K562 (cell line): ENCODE measurements at regions of chr12 and their contacts with region 1.

Region 1: DNA sequence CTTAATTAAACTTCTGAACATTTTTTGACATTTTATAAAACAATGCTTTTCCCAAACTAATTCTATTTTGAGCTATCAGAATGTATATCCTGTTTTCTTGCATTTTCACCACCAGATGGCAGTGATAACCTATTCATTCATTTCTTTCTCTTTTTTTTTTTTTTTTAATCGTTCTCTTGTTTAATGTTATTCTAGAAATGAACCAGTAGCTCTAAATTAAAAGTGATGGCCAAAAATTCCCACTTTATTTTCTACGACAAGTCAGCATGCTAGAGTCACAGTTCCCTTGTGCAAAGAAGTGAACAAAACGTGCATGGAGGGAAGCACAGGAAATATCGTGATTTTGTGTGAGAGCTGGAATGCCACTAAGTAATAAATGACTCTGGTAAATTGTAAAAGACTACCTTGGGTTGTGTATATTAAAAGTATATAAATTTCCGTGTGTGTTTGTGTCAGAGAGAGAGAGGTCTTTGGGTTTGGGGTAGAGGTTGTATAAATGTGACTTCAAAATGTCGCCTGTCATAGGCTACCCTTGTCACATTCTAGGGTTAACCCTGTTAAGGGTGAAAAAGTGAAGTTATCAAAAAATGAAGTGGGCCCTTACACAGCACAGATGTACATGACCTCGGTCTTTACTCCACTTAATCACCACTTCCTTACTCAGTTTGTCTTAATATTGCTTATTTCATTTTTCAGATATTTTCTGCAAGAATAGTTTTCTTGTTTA is 40.4 kb upstream of the LDHB start:
- DNase-seq: peak in 2 of 4 experiments; percentile 6 to 45
- ATAC-seq: no peak
- H3K4me3 ChIP-seq: no peak overlapping the region
- H3K27ac ChIP-seq: no peak overlapping the region
- H3K4me1 ChIP-seq: peaks cover 0 to 3% of the 10 kb centered on the region in 2 experiments; a peak in 1 of 5 replicates
- H3K27me3 ChIP-seq: no peaks in the 10 kb centered on the region
- CTCF ChIP-seq: peak in 2 of 3 experiments; percentile 15 to 67; a peak in 2 of 6 replicates
- EP300 ChIP-seq: no peak
- POLR2A ChIP-seq: no peak
- RAD21 ChIP-seq: peak; percentile 62 to 69

Region 2: DNA sequence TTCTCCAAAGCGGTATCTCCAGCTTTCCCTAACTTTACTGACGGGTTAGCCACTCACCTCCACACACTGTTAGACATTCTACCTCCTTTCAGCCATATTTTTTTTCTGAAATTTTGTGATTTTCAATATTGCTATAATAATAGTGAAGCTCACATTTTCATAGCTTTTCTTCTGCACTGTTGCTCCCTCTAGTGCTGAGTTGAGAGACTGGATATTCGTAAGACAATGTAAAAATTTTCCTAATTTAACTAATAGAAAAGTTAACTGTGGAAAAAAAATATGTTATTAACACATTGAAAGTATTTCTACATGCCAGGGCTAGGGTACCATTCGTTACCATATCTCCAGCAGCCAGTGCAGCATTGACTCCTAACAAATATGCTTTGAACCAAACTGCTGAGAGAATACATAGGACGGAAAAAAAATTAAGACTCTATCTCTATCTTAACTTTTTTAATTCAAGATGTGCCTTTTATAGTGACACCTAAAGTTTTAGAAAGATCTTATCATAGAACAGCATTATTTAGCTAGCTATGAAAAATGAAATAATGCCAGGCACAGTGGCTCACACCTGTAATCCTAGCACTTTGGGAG is 291.8 kb after region 1 on chr12:
- CTCF ChIA-PET with region 1: interaction called, 14 read pairs
- POLR2A ChIA-PET with region 1: interaction called, 3 read pairs
- in situ Hi-C with region 1: no loop called
- intact Hi-C with region 1: loop called (anchors 1 kb)
- DNase-seq: peak in 1 of 4 experiments; percentile 34
- ATAC-seq: 0 out of 3 replicates have a peak, but pooled peaks have one; percentile 30
- H3K4me3 ChIP-seq: no peak overlapping the region
- H3K27ac ChIP-seq: no peak overlapping the region
- H3K4me1 ChIP-seq: peaks cover 0 to 11% of the 10 kb centered on the region in 2 experiments; a peak in 2 of 5 replicates
- H3K27me3 ChIP-seq: no peaks in the 10 kb centered on the region
- CTCF ChIP-seq: peak in 2 of 3 experiments; percentile 21 to 56; a peak in 3 of 6 replicates
- EP300 ChIP-seq: no peak
- POLR2A ChIP-seq: no peak
- RAD21 ChIP-seq: peak; percentile 16 to 54; a peak in 2 of 4 replicates

Region 3: DNA sequence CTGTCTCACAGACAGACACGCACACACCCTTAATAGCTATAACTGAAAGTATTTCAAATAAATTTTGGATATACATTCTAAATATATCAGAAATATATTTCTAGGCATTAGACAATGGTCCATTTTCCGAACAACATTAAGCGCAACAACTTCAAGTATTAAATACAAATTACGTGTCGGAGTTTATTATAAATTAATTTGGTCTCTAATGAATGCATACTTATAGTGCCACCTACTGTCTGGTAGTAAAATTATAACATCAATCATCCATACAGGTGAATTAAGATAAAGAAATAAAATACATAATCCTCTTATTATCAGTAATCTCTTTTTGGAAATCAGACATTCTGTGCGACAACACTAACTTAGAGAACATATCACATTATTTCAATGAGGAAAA is 320.8 kb after region 1 on chr12:
- CTCF ChIA-PET with region 1: interaction called, 11 read pairs
- POLR2A ChIA-PET with region 1: no interaction called
- in situ Hi-C with region 1: no loop called
- intact Hi-C with region 1: loop called (anchors 1 kb)
- DNase-seq: no peak
- ATAC-seq: no peak
- H3K4me3 ChIP-seq: no peak overlapping the region
- H3K27ac ChIP-seq: no peak overlapping the region
- H3K4me1 ChIP-seq: peaks cover 0 to 3% of the 10 kb centered on the region in 2 experiments; a peak in 1 of 5 replicates
- H3K27me3 ChIP-seq: no peaks in the 10 kb centered on the region
- CTCF ChIP-seq: peak in 2 of 3 experiments; percentile 11 to 49; a peak in 3 of 6 replicates
- EP300 ChIP-seq: no peak
- POLR2A ChIP-seq: no peak
- RAD21 ChIP-seq: peak; percentile 36 to 61

Region 4: GRCh38 chr12:22334410-22335290 is 636.6 kb after region 1 on chr12 and contains the start of gene ST8SIA1:
- CTCF ChIA-PET with region 1: no interaction called
- POLR2A ChIA-PET with region 1: no interaction called
- in situ Hi-C with region 1: no loop called
- intact Hi-C with region 1: loop called (anchors 10 kb)
- DNase-seq: no peak
- ATAC-seq: no peak
- H3K4me3 ChIP-seq: peak within 1 kb of the TSS; percentile 27
- H3K27ac ChIP-seq: no peak within 1 kb of the TSS
- H3K4me1 ChIP-seq: peaks cover 0 to 18% of the 10 kb centered on the region in 2 experiments; a peak in 2 of 5 replicates
- H3K27me3 ChIP-seq: peaks cover 0 to 10% of the 10 kb centered on the region in 2 experiments; a peak in 3 of 5 replicates
- CTCF ChIP-seq: no peak
- EP300 ChIP-seq: no peak
- POLR2A ChIP-seq: no peak
- RAD21 ChIP-seq: no peak
- polyA plus RNA-seq, gene ST8SIA1: 22.9 to 26.3 TPM

Region 5: GRCh38 chr12:22443379-22444316 is 745.6 kb after region 1 on chr12:
- CTCF ChIA-PET with region 1: interaction called, 6 read pairs
- POLR2A ChIA-PET with region 1: no interaction called
- in situ Hi-C with region 1: loop called (anchors 5 kb)
- intact Hi-C with region 1: loop called (anchors 5 kb)
- DNase-seq: peak; percentile 32 to 81 (median 45)
- ATAC-seq: peak; percentile 100
- H3K4me3 ChIP-seq: no peak overlapping the region
- H3K27ac ChIP-seq: no peak overlapping the region
- H3K4me1 ChIP-seq: no peaks in the 10 kb centered on the region
- H3K27me3 ChIP-seq: no peaks in the 10 kb centered on the region
- CTCF ChIP-seq: peak; percentile 68 to 79 (median 77)
- EP300 ChIP-seq: no peak
- POLR2A ChIP-seq: no peak
- RAD21 ChIP-seq: peak; percentile 66 to 85